CD8-positive, alpha-beta memory T cell (primary cell): ENCODE measurements at regions of chr2 and their contacts with region 1.

Region 1: DNA sequence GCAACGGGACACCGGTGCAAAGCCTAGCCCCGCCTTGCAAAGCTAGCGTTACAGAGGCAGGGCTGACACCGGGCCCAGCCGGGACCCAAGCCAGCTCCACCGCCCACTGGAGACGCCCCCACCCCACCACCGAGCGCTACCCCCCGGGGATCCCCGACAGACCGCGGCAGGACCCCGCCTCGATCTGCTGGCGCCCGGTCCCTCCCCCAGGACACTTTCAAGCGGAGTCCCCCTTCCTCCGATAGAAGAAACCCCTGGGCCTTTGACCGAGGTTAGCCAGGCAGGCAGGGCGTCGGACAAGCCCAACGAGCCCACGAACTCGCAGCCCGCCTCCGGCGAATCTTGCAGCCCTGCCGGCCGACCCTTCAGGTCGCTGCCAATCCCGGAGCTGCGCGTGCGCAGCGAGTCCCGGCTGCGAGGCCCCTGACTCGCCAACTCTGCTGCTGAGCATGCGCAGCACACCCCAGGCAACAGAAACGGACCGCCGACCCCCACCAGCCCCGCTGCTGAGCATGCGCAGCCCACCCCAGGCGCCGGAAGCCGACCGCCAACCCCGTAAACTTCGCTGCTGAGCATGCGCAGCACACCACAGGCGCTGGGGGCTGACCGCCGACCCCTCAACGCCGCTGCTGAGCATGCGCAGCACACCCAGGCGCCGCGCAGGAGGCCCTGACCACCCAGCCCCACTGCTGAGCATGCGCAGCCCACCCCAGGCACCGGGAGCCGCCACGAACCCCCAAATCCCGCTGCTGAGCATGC is 656 bp downstream of the ADI1 start:
- DNase-seq: peak; percentile 97 to 100 (median 99)
- H3K4me3 ChIP-seq: peak overlapping the region; percentile 80
- H3K4me3 Mint-ChIP-seq: peak overlapping the region; percentile 84 to 95 (median 91)
- H3K27ac ChIP-seq: peak overlapping the region; percentile 93
- H3K27ac Mint-ChIP-seq: peak overlapping the region; percentile 91 to 97 (median 94)
- H3K4me1 ChIP-seq: peaks cover 26% of the 10 kb centered on the region
- H3K4me1 Mint-ChIP-seq: peaks cover 30 to 37% (median 33%) of the 10 kb centered on the region in 3 donors
- H3K27me3 ChIP-seq: no peaks in the 10 kb centered on the region
- H3K27me3 Mint-ChIP-seq: peaks cover 0 to 9% of the 10 kb centered on the region in 2 donors

Region 2: GRCh38 chr2:3461801-3462492 is 56.7 kb before region 1 on chr2:
- CTCF ChIA-PET with region 1: no interaction called
- POLR2A ChIA-PET with region 1: no interaction called
- DNase-seq: peak in 3 of 5 donors; percentile 34 to 39 (median 36)
- H3K4me3 ChIP-seq: no peak overlapping the region
- H3K4me3 Mint-ChIP-seq: no peak overlapping the region
- H3K27ac ChIP-seq: no peak overlapping the region
- H3K27ac Mint-ChIP-seq: peak overlapping the region in 5 of 8 donors; percentile 12 to 71 (median 59)
- H3K4me1 ChIP-seq: peaks cover 5% of the 10 kb centered on the region
- H3K4me1 Mint-ChIP-seq: peaks cover 4 to 5% (median 4%) of the 10 kb centered on the region in 3 donors
- H3K27me3 ChIP-seq: no peaks in the 10 kb centered on the region
- H3K27me3 Mint-ChIP-seq: no peaks in the 10 kb centered on the region

Region 3: GRCh38 chr2:3575534-3576262 is 57.0 kb after region 1 on chr2:
- CTCF ChIA-PET with region 1: no interaction called
- POLR2A ChIA-PET with region 1: interaction called, 12 read pairs
- DNase-seq: peak; percentile 26 to 60 (median 32)
- H3K4me3 ChIP-seq: peak overlapping the region; percentile 76
- H3K4me3 Mint-ChIP-seq: peak overlapping the region; percentile 90 to 98 (median 92)
- H3K27ac ChIP-seq: peak overlapping the region; percentile 85
- H3K27ac Mint-ChIP-seq: peak overlapping the region; percentile 96 to 99 (median 98)
- H3K4me1 ChIP-seq: peaks cover 36% of the 10 kb centered on the region
- H3K4me1 Mint-ChIP-seq: peaks cover 44 to 47% (median 46%) of the 10 kb centered on the region in 3 donors
- H3K27me3 ChIP-seq: no peaks in the 10 kb centered on the region
- H3K27me3 Mint-ChIP-seq: peaks cover 0 to 2% of the 10 kb centered on the region in 2 donors

Region 4: DNA sequence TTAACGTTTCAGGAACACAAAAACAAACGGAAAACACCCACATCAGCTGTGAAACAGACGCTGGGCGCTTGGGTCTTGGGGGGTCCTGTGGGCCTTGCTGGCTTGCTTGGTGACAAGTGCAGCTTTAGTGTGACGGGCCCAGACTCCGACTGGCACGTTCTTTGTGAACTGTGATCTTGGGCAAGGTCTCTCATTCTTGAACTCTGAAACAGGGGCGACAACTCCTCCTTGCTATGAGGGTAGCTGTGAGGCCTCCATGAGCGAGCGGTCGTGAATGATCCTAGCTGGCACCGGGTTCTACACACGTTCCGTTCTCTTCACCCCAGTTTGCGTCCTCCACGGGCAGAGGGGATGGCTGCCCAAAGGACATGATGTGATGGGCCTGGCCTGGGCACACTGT is 67.5 kb after region 1 on chr2:
- CTCF ChIA-PET with region 1: no interaction called
- POLR2A ChIA-PET with region 1: no interaction called
- DNase-seq: no peak
- H3K4me3 ChIP-seq: no peak overlapping the region
- H3K4me3 Mint-ChIP-seq: no peak overlapping the region
- H3K27ac ChIP-seq: no peak overlapping the region
- H3K27ac Mint-ChIP-seq: no peak overlapping the region
- H3K4me1 ChIP-seq: no peaks in the 10 kb centered on the region
- H3K4me1 Mint-ChIP-seq: peaks cover 4 to 7% (median 6%) of the 10 kb centered on the region in 3 donors
- H3K27me3 ChIP-seq: no peaks in the 10 kb centered on the region
- H3K27me3 Mint-ChIP-seq: no peaks in the 10 kb centered on the region